Sciatic nerve (tissue), 2 donors: ENCODE measurements at regions of chr4 and their contacts with region 1.

Region 1: GRCh38 chr4:47907089-47907646 is 7.2 kb downstream of the NFXL1 start:
- DNase-seq: no peak
- ATAC-seq: no peak

Region 2: GRCh38 chr4:49032440-49033161 is 1125.4 kb after region 1 on chr4:
- intact Hi-C with region 1: loop called (anchors 5 kb)
- DNase-seq: no peak
- ATAC-seq: no peak